K562 (cell line): ENCODE measurements at regions of chr1 and their contacts with region 1.

Region 1: GRCh38 chr1:83905315-83905907 is 93.5 kb downstream of the TTLL7 start:
- DNase-seq: peak; percentile 26 to 43 (median 30)
- ATAC-seq: peak; percentile 56; the same call in 2 of the 3 replicates
- H3K4me3 ChIP-seq: no peak overlapping the region
- H3K27ac ChIP-seq: no peak overlapping the region
- H3K4me1 ChIP-seq: peaks cover 0 to 5% of the 10 kb centered on the region in 2 experiments; a peak in 3 of 5 replicates
- H3K27me3 ChIP-seq: no peaks in the 10 kb centered on the region
- CTCF ChIP-seq: peak in 2 of 3 experiments; percentile 31 to 69; a peak in 3 of 6 replicates
- EP300 ChIP-seq: no peak
- POLR2A ChIP-seq: no peak
- RAD21 ChIP-seq: peak; percentile 20 to 62; a peak in 3 of 4 replicates

Region 2: DNA sequence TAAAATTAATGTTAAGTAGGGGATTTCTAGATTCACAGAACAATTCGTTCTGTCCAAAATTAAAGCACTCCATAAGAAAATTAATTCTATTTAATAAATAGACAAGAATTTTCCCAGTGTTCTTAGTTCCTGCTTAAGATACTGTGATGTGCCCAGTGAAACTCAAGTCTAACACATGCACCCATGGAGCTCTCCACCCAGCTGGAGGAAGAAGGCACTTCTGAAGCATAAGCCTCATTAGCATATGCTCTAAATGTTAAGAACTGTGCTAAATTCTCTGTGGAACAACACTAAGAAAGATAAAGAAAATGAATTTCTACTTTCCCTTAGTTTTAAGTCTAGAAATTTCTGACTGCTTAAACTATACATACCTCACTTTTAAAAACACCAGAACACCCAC is 22.3 kb after region 1 on chr1:
- CTCF ChIA-PET with region 1: no interaction called
- POLR2A ChIA-PET with region 1: no interaction called
- in situ Hi-C with region 1: no loop called
- intact Hi-C with region 1: no loop called
- DNase-seq: no peak
- ATAC-seq: no peak
- H3K4me3 ChIP-seq: no peak overlapping the region
- H3K27ac ChIP-seq: no peak overlapping the region
- H3K4me1 ChIP-seq: peaks cover 0 to 3% of the 10 kb centered on the region in 2 experiments; a peak in 1 of 5 replicates
- H3K27me3 ChIP-seq: no peaks in the 10 kb centered on the region
- CTCF ChIP-seq: no peak
- EP300 ChIP-seq: no peak
- POLR2A ChIP-seq: no peak
- RAD21 ChIP-seq: no peak

Region 3: DNA sequence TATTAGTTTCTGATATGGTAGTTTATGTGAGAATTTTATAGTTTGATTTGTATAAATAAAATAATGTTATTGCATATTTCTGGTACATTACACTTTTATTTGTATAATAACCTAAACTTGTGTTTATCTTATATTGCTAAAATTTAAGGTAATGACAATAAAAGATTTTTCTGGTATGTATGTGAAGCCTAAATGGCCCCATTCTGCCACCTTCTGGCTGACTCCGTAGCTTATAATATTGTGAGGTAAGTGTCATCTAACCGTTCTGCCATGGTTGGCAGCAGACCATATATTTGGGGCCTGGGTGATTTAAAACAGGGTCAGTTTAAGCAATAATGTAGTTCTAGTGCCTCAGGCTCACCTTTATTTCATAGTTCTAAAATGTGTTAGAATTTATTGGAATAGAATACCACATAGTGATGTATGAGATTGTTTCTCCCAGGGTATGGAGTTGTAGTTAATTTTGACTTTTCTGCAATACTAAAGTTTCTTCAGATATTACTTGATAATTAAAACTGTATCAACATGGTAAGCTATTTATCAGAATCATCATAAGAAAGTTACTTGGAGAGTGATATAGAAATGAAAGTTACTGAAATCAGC is 217.5 kb after region 1 on chr1:
- CTCF ChIA-PET with region 1: interaction called, 23 read pairs
- POLR2A ChIA-PET with region 1: interaction called, 3 read pairs
- in situ Hi-C with region 1: no loop called
- intact Hi-C with region 1: loop called (anchors 1 kb)
- DNase-seq: peak; percentile 16 to 71 (median 31)
- ATAC-seq: peak; percentile 95
- H3K4me3 ChIP-seq: no peak overlapping the region
- H3K27ac ChIP-seq: no peak overlapping the region
- H3K4me1 ChIP-seq: peaks cover 0 to 4% of the 10 kb centered on the region in 2 experiments; a peak in 2 of 5 replicates
- H3K27me3 ChIP-seq: no peaks in the 10 kb centered on the region
- CTCF ChIP-seq: peak; percentile 65 to 85 (median 65)
- EP300 ChIP-seq: no peak
- POLR2A ChIP-seq: no peak
- RAD21 ChIP-seq: peak; percentile 93 to 95

Region 4: DNA sequence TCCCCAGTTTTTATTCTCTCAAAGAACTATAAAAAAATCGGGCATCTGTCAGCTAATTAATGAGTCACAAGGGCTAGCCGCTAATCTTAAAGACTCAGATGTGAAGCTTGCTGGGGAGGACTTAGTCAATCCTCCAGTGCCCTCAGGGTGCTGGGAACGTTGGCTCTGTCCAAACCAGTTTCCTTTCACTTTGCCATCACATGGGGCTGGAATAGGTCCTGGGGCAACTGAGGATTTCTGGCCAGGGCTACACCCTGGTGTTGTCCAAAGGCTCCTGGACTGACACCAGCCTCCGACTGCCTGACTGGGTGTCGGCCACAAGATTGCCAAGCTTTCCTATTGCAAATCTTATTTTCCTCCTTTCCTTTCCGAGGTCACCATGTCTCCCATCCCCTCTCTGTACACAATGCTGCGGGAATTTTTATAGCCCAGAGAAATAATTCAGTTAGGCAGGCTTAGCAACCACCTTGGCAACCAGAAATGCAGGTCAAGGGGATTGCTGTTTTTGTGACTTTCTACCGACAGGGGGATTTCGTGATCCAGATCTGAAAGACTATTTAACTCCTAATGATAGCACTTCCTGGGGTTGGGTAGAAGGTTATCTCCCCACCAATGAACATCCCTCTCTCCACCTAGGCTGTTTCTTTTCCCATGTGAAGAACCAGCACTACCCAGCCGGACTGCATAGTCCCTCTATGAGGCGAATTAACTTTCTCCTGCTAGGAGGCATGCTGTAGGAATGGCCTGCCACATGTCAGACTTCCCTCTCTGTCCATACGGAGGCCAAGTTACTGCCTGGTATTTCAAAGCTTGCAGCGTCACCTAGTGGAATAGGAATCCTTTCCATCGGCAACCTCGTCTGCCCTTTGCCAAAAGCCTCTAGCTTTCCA is 698.8 kb after region 1 on chr1:
- CTCF ChIA-PET with region 1: interaction called, 3 read pairs
- POLR2A ChIA-PET with region 1: no interaction called
- in situ Hi-C with region 1: loop called (anchors 25 kb)
- intact Hi-C with region 1: loop called (anchors 2 kb)
- DNase-seq: peak; percentile 32 to 80 (median 50)
- ATAC-seq: peak; percentile 92
- H3K4me3 ChIP-seq: peak overlapping the region; percentile 9; the same call in 1 of the 2 replicates
- H3K27ac ChIP-seq: no peak overlapping the region; the same call in 2 of the 3 replicates
- H3K4me1 ChIP-seq: peaks cover 7 to 14% of the 10 kb centered on the region in 2 experiments
- H3K27me3 ChIP-seq: no peaks in the 10 kb centered on the region
- CTCF ChIP-seq: peak; percentile 82 to 93 (median 91)
- EP300 ChIP-seq: no peak
- POLR2A ChIP-seq: no peak
- RAD21 ChIP-seq: peak; percentile 90 to 93

Region 5: DNA sequence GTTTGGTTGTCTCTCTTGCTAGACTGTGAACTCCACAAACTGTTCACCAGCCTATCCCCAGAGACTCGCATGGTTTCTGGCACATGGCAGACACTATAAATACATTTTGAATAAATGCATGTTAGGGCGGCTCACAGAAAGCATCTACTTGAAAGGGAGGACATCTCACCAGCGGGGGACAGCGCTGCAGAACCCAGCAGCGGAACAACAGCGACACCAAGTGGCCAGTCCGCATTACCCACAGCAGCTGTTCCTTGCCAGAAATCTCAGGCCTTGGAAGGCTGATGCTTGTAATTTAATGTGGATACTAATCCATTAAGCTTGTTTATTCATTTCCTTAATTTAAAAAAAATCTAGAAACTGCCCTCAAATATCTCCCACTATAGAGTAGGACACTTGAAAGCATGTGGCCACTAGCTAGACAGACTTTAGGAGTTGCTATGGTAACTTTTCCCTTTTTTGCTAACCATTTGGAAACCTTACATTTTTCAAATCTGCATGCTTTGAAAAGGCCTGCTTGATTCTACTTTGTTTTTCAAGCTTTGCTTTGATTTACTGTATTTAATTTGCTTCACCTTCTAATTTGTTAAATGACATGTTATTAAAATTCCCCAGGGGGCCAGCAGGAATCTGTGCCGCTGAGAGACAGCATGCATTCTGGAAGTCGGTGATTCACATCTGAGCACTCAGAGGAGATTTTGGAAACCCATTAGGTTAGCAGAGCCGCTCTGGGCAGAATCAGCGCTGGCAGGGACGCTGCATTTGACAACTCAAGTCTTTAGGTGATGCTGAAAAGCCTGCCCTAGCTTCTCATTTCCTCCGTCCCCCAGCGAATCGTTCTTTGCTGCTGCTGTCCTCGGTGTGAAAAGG is 848.3 kb after region 1 on chr1:
- CTCF ChIA-PET with region 1: no interaction called
- POLR2A ChIA-PET with region 1: no interaction called
- in situ Hi-C with region 1: no loop called
- intact Hi-C with region 1: loop called (anchors 10 kb)
- DNase-seq: peak; percentile 66 to 78 (median 76)
- ATAC-seq: peak; percentile 94
- H3K4me3 ChIP-seq: no peak overlapping the region
- H3K27ac ChIP-seq: no peak overlapping the region
- H3K4me1 ChIP-seq: no peaks in the 10 kb centered on the region; a peak in 1 of 5 replicates
- H3K27me3 ChIP-seq: peaks cover 0 to 4% of the 10 kb centered on the region in 2 experiments; a peak in 2 of 5 replicates
- CTCF ChIP-seq: peak; percentile 95 to 97 (median 96)
- EP300 ChIP-seq: no peak
- POLR2A ChIP-seq: no peak
- RAD21 ChIP-seq: peak; percentile 95 to 98

Region 6: GRCh38 chr1:84944767-84945486 is 1039.5 kb after region 1 on chr1:
- CTCF ChIA-PET with region 1: no interaction called
- POLR2A ChIA-PET with region 1: no interaction called
- in situ Hi-C with region 1: loop called (anchors 25 kb)
- intact Hi-C with region 1: no loop called
- DNase-seq: peak; percentile 67 to 90 (median 70)
- ATAC-seq: peak; percentile 96
- H3K4me3 ChIP-seq: no peak overlapping the region
- H3K27ac ChIP-seq: no peak overlapping the region; the same call in 2 of the 3 replicates
- H3K4me1 ChIP-seq: no peaks in the 10 kb centered on the region; a peak in 1 of 5 replicates
- H3K27me3 ChIP-seq: peaks cover 14 to 21% of the 10 kb centered on the region in 2 experiments; a peak in 4 of 5 replicates
- CTCF ChIP-seq: peak; percentile 71 to 88 (median 73)
- EP300 ChIP-seq: no peak
- POLR2A ChIP-seq: no peak
- RAD21 ChIP-seq: peak; percentile 87 to 94